Naive thymus-derived CD4-positive, alpha-beta T cell (primary cell): ENCODE measurements at regions of chr12 and their contacts with region 1.

Region 1: DNA sequence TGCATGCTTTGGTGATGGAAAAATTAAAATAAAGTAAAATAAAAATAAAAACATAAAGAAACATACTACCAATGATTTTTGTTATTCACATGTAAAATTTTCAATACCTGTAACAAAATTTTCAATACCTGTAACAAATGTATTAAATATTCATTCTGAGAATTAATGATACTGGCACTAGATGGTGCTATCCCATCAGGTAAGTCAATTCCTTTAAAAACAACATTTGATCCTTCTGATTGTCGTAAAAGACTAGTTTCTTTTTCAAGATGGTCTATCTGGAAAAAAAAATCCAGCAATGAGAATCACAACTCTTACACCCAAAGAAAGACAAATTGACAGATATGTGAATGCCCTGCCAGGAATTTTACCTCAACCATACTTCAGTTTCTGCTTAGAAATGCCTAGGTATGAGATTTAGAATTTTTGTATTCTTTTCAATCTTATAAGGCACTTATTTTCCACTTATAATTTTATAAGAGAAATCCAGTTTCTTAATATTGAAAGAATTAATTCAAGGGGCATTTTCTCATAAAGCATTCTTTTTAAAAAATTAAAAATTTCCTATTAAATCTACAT is 30.7 kb downstream of the CEP290 start:
- DNase-seq: peak in 4 of 9 donors; percentile 6 to 22 (median 17)
- ATAC-seq: no peak
- H3K4me3 ChIP-seq: no peak overlapping the region
- H3K4me3 Mint-ChIP-seq: peak overlapping the region in 3 of 10 donors; percentile 30 to 46 (median 45)
- H3K27ac ChIP-seq: no peak overlapping the region
- H3K27ac Mint-ChIP-seq: peak overlapping the region in 1 of 9 donors; percentile 52
- H3K4me1 ChIP-seq: no peaks in the 10 kb centered on the region
- H3K4me1 Mint-ChIP-seq: peaks cover 0 to 4% (median 0%) of the 10 kb centered on the region in 7 donors
- H3K27me3 ChIP-seq: no peaks in the 10 kb centered on the region
- H3K27me3 Mint-ChIP-seq: no peaks in the 10 kb centered on the region

Region 2: DNA sequence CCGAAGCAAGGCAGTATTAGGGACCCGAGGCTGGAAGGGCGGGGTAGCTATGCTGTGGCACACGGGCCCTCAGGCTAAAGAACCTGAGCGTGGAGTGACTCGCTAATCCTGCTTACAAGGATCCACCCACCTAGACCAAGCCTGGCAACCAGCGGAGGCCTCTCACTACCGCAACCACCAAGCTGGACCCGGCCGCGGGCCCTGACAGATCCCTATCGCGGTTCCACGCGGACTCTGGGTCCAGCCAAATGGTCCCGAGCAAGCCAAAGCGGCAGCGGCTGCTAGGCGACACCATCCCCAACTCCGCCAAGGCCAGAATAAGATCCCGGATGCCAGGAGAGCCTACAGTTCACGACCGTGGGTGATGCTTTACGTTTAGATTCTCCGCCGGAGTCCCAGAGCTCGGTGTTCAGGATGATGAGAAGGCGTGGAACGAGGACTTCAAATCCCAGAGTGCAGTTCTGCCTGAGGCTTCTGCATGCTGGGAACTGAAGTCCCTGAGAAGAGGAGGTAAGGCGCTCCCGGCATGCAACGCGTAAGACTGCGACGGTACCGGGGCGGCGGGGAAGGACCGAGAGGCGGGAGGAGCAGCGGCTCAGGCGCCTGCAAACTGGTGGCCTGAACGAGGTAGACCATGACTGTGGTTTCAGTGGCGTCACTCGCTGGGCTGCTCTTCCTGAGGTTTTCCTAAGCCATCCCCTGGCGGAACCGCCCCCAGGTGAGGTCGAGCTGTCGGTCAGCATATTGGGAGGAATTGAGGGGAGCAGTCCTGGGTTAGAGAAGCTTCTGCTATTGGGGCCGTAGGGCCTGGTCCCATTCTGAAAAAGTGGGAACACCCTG is 30.8 kb after region 1 on chr12 and contains the starts of genes CEP290 and TMTC3:
- CTCF ChIA-PET with region 1: no interaction called
- POLR2A ChIA-PET with region 1: no interaction called
- intact Hi-C with region 1: loop called in 1 of 2 experiments (anchors 2 kb)
- DNase-seq: peak; percentile 69 to 98 (median 94)
- ATAC-seq: peak; percentile 97
- H3K4me3 ChIP-seq: peak within 1 kb of the TSS; percentile 82
- H3K4me3 Mint-ChIP-seq: peak within 1 kb of the TSS; percentile 88 to 100 (median 96)
- H3K27ac ChIP-seq: peak within 1 kb of the TSS; percentile 84
- H3K27ac Mint-ChIP-seq: peak within 1 kb of the TSS; percentile 66 to 99 (median 94)
- H3K4me1 ChIP-seq: peaks cover 12 to 14% of the 10 kb centered on the region in 2 donors
- H3K4me1 Mint-ChIP-seq: peaks cover 26 to 68% (median 45%) of the 10 kb centered on the region in 7 donors
- H3K27me3 ChIP-seq: no peaks in the 10 kb centered on the region
- H3K27me3 Mint-ChIP-seq: no peaks in the 10 kb centered on the region
- total RNA-seq, gene CEP290: 14.7 to 29.5 (median 19.5) TPM
- total RNA-seq, gene TMTC3: 6.4 to 11.1 (median 7.5) TPM

Region 3: DNA sequence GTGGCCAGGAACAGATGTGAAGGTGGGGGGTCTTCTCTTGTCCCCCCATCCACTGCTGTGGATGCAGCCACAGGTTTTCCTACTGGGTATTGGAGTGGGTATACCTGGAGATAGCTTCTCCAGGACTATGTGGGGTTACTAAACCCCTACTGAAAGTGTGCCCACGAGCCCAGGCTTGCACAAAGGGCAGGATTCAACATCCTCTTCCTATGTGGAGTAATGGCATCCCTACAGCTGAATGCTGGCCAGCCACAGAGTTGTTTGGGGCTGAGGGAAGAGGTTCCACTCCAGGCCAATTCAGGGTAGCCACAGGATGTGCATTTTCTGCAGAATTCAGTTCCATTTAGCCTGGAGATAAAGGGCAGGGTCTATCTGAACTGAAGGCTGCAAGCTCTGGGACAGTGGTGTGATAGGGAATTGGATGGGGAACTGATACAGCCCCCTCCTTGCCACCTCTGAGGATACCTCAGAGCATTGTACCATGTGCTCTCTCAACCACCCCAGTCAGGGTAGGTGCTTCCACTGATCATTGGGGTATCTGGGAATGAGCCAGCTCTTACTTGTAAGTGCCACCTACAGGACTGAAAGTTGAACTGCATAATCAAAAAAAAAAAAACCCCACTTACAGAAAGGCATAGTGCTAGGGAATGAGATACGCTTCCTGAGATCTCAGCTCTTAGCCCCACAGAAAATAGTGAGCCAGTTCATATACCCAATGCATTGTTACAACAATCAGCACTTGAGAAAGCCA is 282.0 kb after region 1 on chr12:
- CTCF ChIA-PET with region 1: no interaction called
- POLR2A ChIA-PET with region 1: no interaction called
- intact Hi-C with region 1: loop called in 1 of 2 experiments (anchors 1 kb)
- DNase-seq: no peak
- ATAC-seq: no peak
- H3K4me3 ChIP-seq: no peak overlapping the region
- H3K4me3 Mint-ChIP-seq: no peak overlapping the region
- H3K27ac ChIP-seq: no peak overlapping the region
- H3K27ac Mint-ChIP-seq: no peak overlapping the region
- H3K4me1 ChIP-seq: no peaks in the 10 kb centered on the region
- H3K4me1 Mint-ChIP-seq: no peaks in the 10 kb centered on the region
- H3K27me3 ChIP-seq: no peaks in the 10 kb centered on the region
- H3K27me3 Mint-ChIP-seq: peaks cover 0 to 4% (median 0%) of the 10 kb centered on the region in 5 donors

Region 4: DNA sequence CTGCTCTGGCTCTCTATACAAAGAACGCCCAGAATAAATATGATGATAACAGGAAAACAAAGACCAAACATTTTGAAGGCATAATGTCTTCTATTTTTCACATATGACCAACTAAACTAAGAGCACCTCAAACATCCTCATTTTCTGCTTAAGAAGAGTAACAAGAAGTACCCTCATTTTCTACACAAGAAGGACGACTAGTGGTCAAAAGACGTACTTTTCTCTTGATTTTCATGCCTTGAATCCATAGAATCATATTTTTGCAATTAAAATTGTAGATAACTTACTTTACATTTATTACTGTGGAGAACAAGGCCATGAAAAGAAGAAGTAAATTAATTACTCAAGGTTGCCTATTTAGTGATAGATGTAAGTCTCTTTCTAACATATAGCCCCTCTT is 882.5 kb after region 1 on chr12:
- CTCF ChIA-PET with region 1: no interaction called
- POLR2A ChIA-PET with region 1: no interaction called
- intact Hi-C with region 1: loop called in 1 of 2 experiments (anchors 1 kb)
- DNase-seq: no peak
- ATAC-seq: no peak
- H3K4me3 ChIP-seq: no peak overlapping the region
- H3K4me3 Mint-ChIP-seq: no peak overlapping the region
- H3K27ac ChIP-seq: no peak overlapping the region
- H3K27ac Mint-ChIP-seq: no peak overlapping the region
- H3K4me1 ChIP-seq: no peaks in the 10 kb centered on the region
- H3K4me1 Mint-ChIP-seq: no peaks in the 10 kb centered on the region
- H3K27me3 ChIP-seq: no peaks in the 10 kb centered on the region
- H3K27me3 Mint-ChIP-seq: peaks cover 12 to 42% (median 20%) of the 10 kb centered on the region in 5 donors

Region 5: DNA sequence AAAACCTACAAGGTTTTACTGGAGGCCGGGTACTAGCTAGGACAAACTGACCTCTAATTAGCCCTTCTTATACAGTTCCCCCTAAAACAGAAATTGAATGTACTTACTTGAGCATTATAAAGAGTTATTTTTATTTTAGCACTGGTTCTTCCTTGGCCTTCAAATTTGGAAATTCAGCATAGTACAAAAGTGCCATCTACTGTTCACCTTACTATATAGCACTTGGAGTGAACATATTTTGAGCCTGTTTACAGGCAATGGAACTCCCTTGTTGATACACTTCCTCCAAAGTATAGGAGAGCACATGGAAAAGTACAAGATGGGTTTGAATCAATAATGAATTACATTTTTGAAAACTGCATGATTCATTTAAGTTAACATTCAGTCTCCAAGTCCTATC is 1418.6 kb after region 1 on chr12:
- CTCF ChIA-PET with region 1: no interaction called
- POLR2A ChIA-PET with region 1: no interaction called
- intact Hi-C with region 1: loop called (anchors 1 to 10 kb)
- DNase-seq: peak in 7 of 9 donors; percentile 30 to 62 (median 52)
- ATAC-seq: peak; percentile 58
- H3K4me3 ChIP-seq: no peak overlapping the region
- H3K4me3 Mint-ChIP-seq: no peak overlapping the region
- H3K27ac ChIP-seq: no peak overlapping the region
- H3K27ac Mint-ChIP-seq: peak overlapping the region in 4 of 9 donors; percentile 7 to 71 (median 47)
- H3K4me1 ChIP-seq: peaks cover 5 to 6% of the 10 kb centered on the region in 2 donors
- H3K4me1 Mint-ChIP-seq: peaks cover 4 to 28% (median 16%) of the 10 kb centered on the region in 7 donors
- H3K27me3 ChIP-seq: no peaks in the 10 kb centered on the region
- H3K27me3 Mint-ChIP-seq: no peaks in the 10 kb centered on the region